IMR-90 (cell line): ENCODE measurements at regions of chr18 and their contacts with region 1.

Region 1: DNA sequence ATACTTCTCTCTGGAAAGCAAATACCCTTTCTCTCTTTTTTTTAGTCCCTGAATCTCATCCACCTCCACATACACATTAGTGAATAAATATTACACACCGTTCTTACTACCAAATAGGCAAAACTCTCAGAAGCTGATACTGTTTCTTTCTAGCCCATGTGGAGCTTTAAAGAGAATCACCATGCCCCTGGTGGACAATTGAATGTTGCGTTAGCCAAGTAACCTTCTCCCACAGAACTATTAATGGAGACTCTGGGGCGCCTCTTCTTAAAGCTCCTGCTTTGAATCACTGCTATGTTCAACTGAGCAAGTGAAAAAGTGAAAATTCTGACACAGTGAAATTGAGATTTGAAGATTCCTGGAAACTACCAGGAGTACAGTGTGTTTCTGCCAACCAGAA is 522.8 kb upstream of the CDH7 start:
- DNase-seq: no peak
- ATAC-seq: no peak
- H3K4me3 ChIP-seq: no peak overlapping the region
- H3K27ac ChIP-seq: no peak overlapping the region
- H3K4me1 ChIP-seq: no peaks in the 10 kb centered on the region
- H3K27me3 ChIP-seq: no peaks in the 10 kb centered on the region
- CTCF ChIP-seq: no peak
- POLR2A ChIP-seq: no peak
- RAD21 ChIP-seq: no peak

Region 2: GRCh38 chr18:64695851-64696553 is 532.0 kb before region 1 on chr18:
- CTCF ChIA-PET with region 1: no interaction called
- POLR2A ChIA-PET with region 1: no interaction called
- dilution Hi-C with region 1: no loop called
- in situ Hi-C with region 1: no loop called
- intact Hi-C with region 1: loop called (anchors 10 kb)
- DNase-seq: no peak
- ATAC-seq: no peak
- H3K4me3 ChIP-seq: no peak overlapping the region
- H3K27ac ChIP-seq: no peak overlapping the region
- H3K4me1 ChIP-seq: no peaks in the 10 kb centered on the region
- H3K27me3 ChIP-seq: no peaks in the 10 kb centered on the region
- CTCF ChIP-seq: no peak
- POLR2A ChIP-seq: no peak
- RAD21 ChIP-seq: no peak

Region 3: GRCh38 chr18:65035701-65036100 is 192.3 kb before region 1 on chr18:
- CTCF ChIA-PET with region 1: no interaction called
- POLR2A ChIA-PET with region 1: no interaction called
- dilution Hi-C with region 1: no loop called
- in situ Hi-C with region 1: no loop called
- intact Hi-C with region 1: no loop called
- DNase-seq: no peak
- ATAC-seq: no peak
- H3K4me3 ChIP-seq: no peak overlapping the region
- H3K27ac ChIP-seq: no peak overlapping the region
- H3K4me1 ChIP-seq: no peaks in the 10 kb centered on the region
- H3K27me3 ChIP-seq: no peaks in the 10 kb centered on the region
- CTCF ChIP-seq: no peak
- POLR2A ChIP-seq: no peak
- RAD21 ChIP-seq: no peak